Spleen (tissue), 13 donors: ENCODE measurements at regions of chr11 and their contacts with region 1.

Region 1: DNA sequence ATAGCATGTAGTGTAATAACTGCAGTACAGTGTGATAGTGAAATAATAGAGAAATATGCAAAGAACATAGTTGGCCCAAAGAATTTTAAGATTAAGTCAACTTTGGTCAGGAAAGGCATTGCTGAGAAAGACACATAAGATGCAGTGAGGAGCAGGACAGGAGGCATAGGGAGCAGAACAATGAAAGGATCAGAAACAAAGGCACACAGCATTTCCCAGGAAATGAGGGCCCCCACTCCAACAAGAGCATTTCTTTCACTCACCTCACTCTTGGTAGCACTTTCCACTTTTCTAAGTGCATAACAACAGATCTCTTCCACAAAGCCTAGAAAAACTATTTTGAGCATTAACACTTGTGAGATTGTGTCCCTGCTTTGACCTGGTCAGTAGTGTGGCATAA is 238.4 kb upstream of the FAT3 start:
- DNase-seq: no peak
- H3K4me3 ChIP-seq: no peak overlapping the region
- H3K27ac ChIP-seq: no peak overlapping the region
- H3K4me1 ChIP-seq: no peaks in the 10 kb centered on the region
- H3K27me3 ChIP-seq: no peaks in the 10 kb centered on the region
- CTCF ChIP-seq: no peak
- POLR2A ChIP-seq: no peak

Region 2: GRCh38 chr11:91810871-91811270 is 175.3 kb before region 1 on chr11:
- intact Hi-C with region 1: no loop called
- DNase-seq: no peak
- H3K4me3 ChIP-seq: no peak overlapping the region
- H3K27ac ChIP-seq: no peak overlapping the region
- H3K4me1 ChIP-seq: no peaks in the 10 kb centered on the region
- H3K27me3 ChIP-seq: no peaks in the 10 kb centered on the region
- CTCF ChIP-seq: no peak
- POLR2A ChIP-seq: no peak

Region 3: DNA sequence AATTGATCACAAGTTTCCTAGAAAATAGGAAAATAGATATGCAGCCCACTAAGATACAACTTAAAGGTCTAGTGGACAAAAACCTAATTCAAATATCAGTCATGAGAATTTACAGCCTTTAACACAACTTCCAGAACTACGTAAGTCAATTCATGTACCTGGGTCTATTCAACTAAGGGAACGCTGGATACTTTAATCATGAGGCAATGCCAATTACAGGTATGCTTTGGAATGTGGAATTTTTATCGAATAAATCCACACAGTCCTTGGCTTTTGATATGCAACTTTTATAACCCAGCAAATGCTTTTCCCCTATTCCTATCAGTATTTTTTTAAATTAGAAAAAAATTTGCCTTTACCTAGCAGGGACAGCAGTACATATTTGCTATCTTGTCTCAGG is 51.1 kb before region 1 on chr11:
- intact Hi-C with region 1: loop called (anchors 5 kb)
- DNase-seq: no peak
- H3K4me3 ChIP-seq: no peak overlapping the region
- H3K27ac ChIP-seq: no peak overlapping the region
- H3K4me1 ChIP-seq: no peaks in the 10 kb centered on the region
- H3K27me3 ChIP-seq: no peaks in the 10 kb centered on the region
- CTCF ChIP-seq: no peak
- POLR2A ChIP-seq: no peak